GM12878 (cell line): ENCODE measurements at regions of chr16 and their contacts with region 1.

Region 1: DNA sequence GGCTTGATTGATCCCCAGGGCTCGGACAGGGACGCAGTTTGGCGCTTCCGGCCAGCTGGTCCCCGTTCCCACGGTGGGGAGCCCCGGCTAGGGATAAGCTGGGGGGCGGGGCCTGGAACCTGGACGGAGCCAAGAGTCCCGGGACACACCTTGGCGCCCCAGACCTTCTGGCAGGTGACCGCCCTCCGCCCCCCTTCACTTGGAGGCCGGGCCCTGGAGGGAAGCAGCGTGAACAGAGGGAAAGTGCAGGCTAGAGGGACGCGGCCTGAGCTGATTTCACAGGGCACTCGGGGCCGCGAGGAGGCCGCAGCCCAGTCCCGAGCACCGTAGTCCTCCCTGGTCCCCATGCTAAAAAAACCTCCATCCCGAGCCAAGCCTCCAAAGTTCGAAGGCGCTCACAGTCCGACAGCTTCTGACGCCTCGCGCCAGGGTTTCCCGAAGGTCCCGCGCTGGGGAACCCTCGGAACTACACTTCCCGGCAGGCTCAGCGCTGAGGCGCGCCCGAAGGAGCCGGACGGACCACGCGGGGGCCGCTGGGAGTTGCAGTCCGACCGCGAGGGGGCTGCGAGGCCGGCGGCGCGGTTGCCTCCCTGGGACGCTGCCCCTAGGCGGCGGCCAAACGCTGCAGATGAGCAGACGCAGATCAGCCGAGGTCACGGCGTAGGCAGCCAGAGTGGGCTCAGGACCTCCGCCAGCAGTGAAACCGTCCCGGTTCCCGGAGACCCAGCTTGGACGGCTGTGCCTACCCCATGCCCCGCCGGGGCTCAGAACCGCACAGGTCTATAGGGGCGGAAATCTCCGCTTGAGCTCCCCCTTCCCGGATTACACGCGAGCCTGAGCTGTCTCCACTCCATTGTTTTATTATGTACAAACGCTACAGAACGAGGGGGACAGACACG is at the start of gene TBX6:
- DNase-seq: peak; percentile 64
- ATAC-seq: peak; percentile 88
- H3K4me3 ChIP-seq: peak within 1 kb of the TSS; percentile 72
- H3K27ac ChIP-seq: peak within 1 kb of the TSS; percentile 88
- H3K4me1 ChIP-seq: peaks cover 26% of the 10 kb centered on the region
- H3K27me3 ChIP-seq: no peaks in the 10 kb centered on the region
- CTCF ChIP-seq: peak; percentile 82 to 95 (median 83)
- EP300 ChIP-seq: no peak
- POLR2A ChIP-seq: peak; percentile 84
- RAD21 ChIP-seq: peak; percentile 58
- polyA plus RNA-seq, gene TBX6: not detected

Region 2: GRCh38 chr16:29986231-29986630 is 105.5 kb before region 1 on chr16:
- CTCF ChIA-PET with region 1: no interaction called
- POLR2A ChIA-PET with region 1: no interaction called
- RAD21 ChIA-PET with region 1: no interaction called
- SMC1A ChIA-PET with region 1: no interaction called
- in situ Hi-C with region 1: no loop called
- intact Hi-C with region 1: no loop called
- DNase-seq: no peak
- ATAC-seq: no peak
- H3K4me3 ChIP-seq: no peak overlapping the region
- H3K27ac ChIP-seq: no peak overlapping the region
- H3K4me1 ChIP-seq: no peaks in the 10 kb centered on the region
- H3K27me3 ChIP-seq: no peaks in the 10 kb centered on the region
- CTCF ChIP-seq: no peak
- EP300 ChIP-seq: no peak
- POLR2A ChIP-seq: no peak
- RAD21 ChIP-seq: no peak

Region 3: GRCh38 chr16:30032083-30032819 is 59.5 kb before region 1 on chr16:
- CTCF ChIA-PET with region 1: interaction called, 10 read pairs
- POLR2A ChIA-PET with region 1: no interaction called
- RAD21 ChIA-PET with region 1: no interaction called
- SMC1A ChIA-PET with region 1: interaction called, 3 read pairs
- in situ Hi-C with region 1: no loop called
- intact Hi-C with region 1: no loop called
- DNase-seq: no peak
- ATAC-seq: peak; percentile 77
- H3K4me3 ChIP-seq: no peak overlapping the region
- H3K27ac ChIP-seq: no peak overlapping the region
- H3K4me1 ChIP-seq: peaks cover 13% of the 10 kb centered on the region
- H3K27me3 ChIP-seq: peaks cover 6 to 12% of the 10 kb centered on the region in 2 experiments; a peak in 3 of 4 replicates
- CTCF ChIP-seq: peak; percentile 79 to 85 (median 84)
- EP300 ChIP-seq: no peak
- POLR2A ChIP-seq: no peak
- RAD21 ChIP-seq: peak; percentile 88

Region 4: GRCh38 chr16:30052671-30053372 is 38.9 kb before region 1 on chr16:
- CTCF ChIA-PET with region 1: interaction called, 13 read pairs
- POLR2A ChIA-PET with region 1: interaction called, 5 read pairs
- RAD21 ChIA-PET with region 1: interaction called, 9 read pairs
- SMC1A ChIA-PET with region 1: interaction called, 5 read pairs
- in situ Hi-C with region 1: no loop called
- intact Hi-C with region 1: no loop called
- DNase-seq: peak; percentile 74
- ATAC-seq: peak; percentile 90
- H3K4me3 ChIP-seq: peak overlapping the region; percentile 83
- H3K27ac ChIP-seq: peak overlapping the region; percentile 55
- H3K4me1 ChIP-seq: peaks cover 3% of the 10 kb centered on the region; the same call in 1 of the 2 replicates
- H3K27me3 ChIP-seq: no peaks in the 10 kb centered on the region
- CTCF ChIP-seq: no peak
- EP300 ChIP-seq: peak in 1 of 2 experiments; percentile 49; a peak in 1 of 4 replicates
- POLR2A ChIP-seq: peak; percentile 70
- RAD21 ChIP-seq: no peak

Region 5: GRCh38 chr16:30075507-30076275 is 16.0 kb before region 1 on chr16 and contains the start of gene PPP4C:
- CTCF ChIA-PET with region 1: interaction called, 30 read pairs
- POLR2A ChIA-PET with region 1: interaction called, 35 read pairs
- RAD21 ChIA-PET with region 1: interaction called, 10 read pairs
- SMC1A ChIA-PET with region 1: interaction called, 10 read pairs
- in situ Hi-C with region 1: no loop called
- intact Hi-C with region 1: no loop called
- DNase-seq: no peak
- ATAC-seq: peak; percentile 90
- H3K4me3 ChIP-seq: peak within 1 kb of the TSS; percentile 92
- H3K27ac ChIP-seq: peak within 1 kb of the TSS; percentile 84
- H3K4me1 ChIP-seq: peaks cover 10% of the 10 kb centered on the region
- H3K27me3 ChIP-seq: no peaks in the 10 kb centered on the region
- CTCF ChIP-seq: no peak; a peak in 1 of 6 replicates
- EP300 ChIP-seq: no peak
- POLR2A ChIP-seq: peak; percentile 88
- RAD21 ChIP-seq: no peak
- polyA plus RNA-seq, gene PPP4C: 2.7 to 18.8 TPM

Region 6: DNA sequence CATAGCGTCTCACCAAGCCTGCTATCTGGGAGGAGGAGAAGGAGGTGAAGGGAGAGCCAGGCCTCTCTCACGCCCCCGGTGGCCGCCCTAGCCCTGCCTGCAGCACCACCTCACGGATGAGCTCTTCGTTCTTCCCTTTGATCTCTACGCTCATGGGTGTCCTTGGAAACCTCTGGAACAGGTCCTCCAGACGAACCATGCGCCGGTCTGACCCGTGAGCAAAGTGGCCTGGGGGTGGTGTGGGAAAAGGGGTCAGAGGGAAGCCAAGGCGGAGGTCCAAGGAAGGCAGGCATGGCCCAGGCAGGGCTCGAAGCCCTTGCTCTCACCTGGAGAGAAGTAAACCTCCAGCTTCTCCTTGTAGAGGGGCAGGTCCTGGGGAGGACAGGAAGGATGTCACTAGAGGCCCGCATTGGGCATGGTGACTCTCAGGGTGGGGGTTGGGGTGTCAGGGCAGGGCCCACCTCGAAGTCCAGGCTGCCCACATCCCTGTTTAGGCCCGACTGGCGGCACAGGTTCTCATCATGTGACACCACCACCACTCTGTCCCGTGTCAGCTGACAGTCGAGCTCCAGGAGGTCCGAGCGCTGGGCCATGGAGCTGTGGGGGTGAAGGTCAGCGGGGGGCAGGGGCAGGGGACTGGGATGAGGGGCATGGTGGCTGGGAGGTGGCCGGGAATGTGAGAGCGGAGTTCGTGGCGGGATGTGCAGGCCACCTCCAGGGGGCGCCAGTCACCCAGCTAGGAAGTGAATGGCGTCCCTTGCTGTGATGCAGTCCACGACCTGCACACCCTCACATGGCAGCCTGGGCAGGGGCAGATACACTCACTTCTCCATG is 20.7 kb after region 1 on chr16:
- CTCF ChIA-PET with region 1: interaction called, 21 read pairs
- POLR2A ChIA-PET with region 1: no interaction called
- RAD21 ChIA-PET with region 1: interaction called, 13 read pairs
- SMC1A ChIA-PET with region 1: interaction called, 6 read pairs
- in situ Hi-C with region 1: no loop called
- intact Hi-C with region 1: no loop called
- DNase-seq: no peak
- ATAC-seq: peak; percentile 93
- H3K4me3 ChIP-seq: no peak overlapping the region
- H3K27ac ChIP-seq: no peak overlapping the region
- H3K4me1 ChIP-seq: peaks cover 2% of the 10 kb centered on the region
- H3K27me3 ChIP-seq: no peaks in the 10 kb centered on the region
- CTCF ChIP-seq: peak; percentile 75 to 87 (median 76)
- EP300 ChIP-seq: no peak
- POLR2A ChIP-seq: no peak
- RAD21 ChIP-seq: peak; percentile 61

Region 7: GRCh38 chr16:30183233-30184095 is 91.7 kb after region 1 on chr16 and contains the start of gene CORO1A:
- CTCF ChIA-PET with region 1: interaction called, 45 read pairs
- POLR2A ChIA-PET with region 1: interaction called, 59 read pairs
- RAD21 ChIA-PET with region 1: interaction called, 20 read pairs
- SMC1A ChIA-PET with region 1: interaction called, 30 read pairs
- in situ Hi-C with region 1: no loop called
- intact Hi-C with region 1: no loop called
- DNase-seq: peak; percentile 32
- ATAC-seq: peak; percentile 51
- H3K4me3 ChIP-seq: peak within 1 kb of the TSS; percentile 96
- H3K27ac ChIP-seq: peak within 1 kb of the TSS; percentile 100
- H3K4me1 ChIP-seq: peaks cover 28% of the 10 kb centered on the region
- H3K27me3 ChIP-seq: no peaks in the 10 kb centered on the region
- CTCF ChIP-seq: no peak
- EP300 ChIP-seq: no peak
- POLR2A ChIP-seq: peak; percentile 62
- RAD21 ChIP-seq: no peak
- polyA plus RNA-seq, gene CORO1A: 16.3 to 35.3 TPM

Region 8: DNA sequence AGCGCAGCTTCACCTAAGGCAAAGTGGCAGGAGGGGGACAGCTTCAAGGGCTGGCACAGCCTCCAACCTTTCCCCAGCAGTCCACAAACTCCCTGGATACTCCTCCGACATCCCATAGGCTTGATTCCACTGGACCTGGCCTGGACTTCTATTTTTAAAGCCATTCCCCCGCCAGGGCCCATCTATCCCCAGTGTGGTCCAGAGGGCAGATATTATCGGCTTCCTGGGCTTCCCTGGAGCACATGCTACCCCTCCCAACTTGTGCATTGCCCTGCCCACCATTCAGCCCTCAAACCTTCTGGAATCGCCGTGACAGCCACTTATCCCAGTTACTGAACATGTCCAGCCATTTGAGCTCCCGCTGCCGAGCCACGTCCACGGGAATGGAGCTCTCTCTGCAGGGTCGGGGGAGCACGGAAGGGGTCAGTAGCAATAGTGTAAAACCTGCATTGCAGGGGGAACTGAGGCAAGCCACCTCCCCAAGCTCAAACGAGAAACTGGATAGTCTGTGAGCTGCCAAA is 273.5 kb after region 1 on chr16:
- CTCF ChIA-PET with region 1: interaction called, 13 read pairs
- POLR2A ChIA-PET with region 1: interaction called, 9 read pairs
- RAD21 ChIA-PET with region 1: interaction called, 6 read pairs
- SMC1A ChIA-PET with region 1: interaction called, 3 read pairs
- in situ Hi-C with region 1: no loop called
- intact Hi-C with region 1: no loop called
- DNase-seq: no peak
- ATAC-seq: no peak
- H3K4me3 ChIP-seq: no peak overlapping the region
- H3K27ac ChIP-seq: no peak overlapping the region
- H3K4me1 ChIP-seq: peaks cover 6% of the 10 kb centered on the region
- H3K27me3 ChIP-seq: no peaks in the 10 kb centered on the region
- CTCF ChIP-seq: no peak
- EP300 ChIP-seq: no peak
- POLR2A ChIP-seq: no peak
- RAD21 ChIP-seq: no peak